Activated CD4-positive, alpha-beta T cell treated with anti-CD3 and anti-CD28 coated beads, Interleukin-2, amount 10 ng/mL, durations not matched to agents 7 days and 5 days (primary cell): ENCODE measurements at regions of chr1 and their contacts with region 1.

Region 1: DNA sequence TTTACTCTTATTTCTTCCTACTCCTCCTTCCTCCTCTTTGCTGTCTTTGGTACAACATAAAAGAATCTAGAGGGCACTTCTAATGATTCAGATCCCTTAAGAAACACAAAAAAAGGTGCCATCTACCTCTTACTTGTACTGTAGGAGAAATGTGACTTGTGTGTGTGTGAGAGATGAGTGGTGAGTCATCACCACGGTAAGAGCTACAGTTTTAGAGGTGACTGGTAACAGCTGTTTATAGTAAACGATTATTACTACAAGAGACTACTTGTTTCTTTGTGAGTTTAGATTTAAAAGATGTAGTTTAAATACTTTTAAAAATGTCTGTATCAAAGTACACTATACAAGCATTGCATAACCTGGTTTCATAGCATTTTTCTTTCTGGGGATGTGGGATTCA is 40.4 kb downstream of the SLC35D1 start:
- DNase-seq: no peak
- H3K4me3 Mint-ChIP-seq: no peak overlapping the region
- H3K27ac Mint-ChIP-seq: no peak overlapping the region
- H3K4me1 Mint-ChIP-seq: peaks cover 2% of the 10 kb centered on the region
- H3K27me3 Mint-ChIP-seq: no peaks in the 10 kb centered on the region

Region 2: DNA sequence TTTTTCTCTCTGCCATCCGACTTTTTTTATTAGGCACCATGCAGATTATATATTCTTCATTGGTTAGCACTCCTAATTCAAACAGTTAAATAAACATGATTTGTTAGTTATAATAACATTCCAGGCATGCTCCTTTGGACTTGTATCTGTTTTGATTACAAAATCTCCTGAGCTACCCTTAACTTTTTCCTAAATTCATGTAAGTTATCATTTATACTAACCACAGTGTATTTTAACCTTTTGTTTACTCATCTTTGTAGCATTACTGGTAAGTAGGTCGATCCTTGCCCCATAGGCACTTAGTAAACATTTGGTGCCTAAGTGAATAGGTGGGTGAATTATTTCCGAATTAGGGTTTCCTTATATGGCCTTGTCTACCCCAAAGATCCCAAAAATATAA is 45.0 kb before region 1 on chr1:
- CTCF ChIA-PET with region 1: no interaction called
- POLR2A ChIA-PET with region 1: no interaction called
- DNase-seq: no peak
- H3K4me3 Mint-ChIP-seq: no peak overlapping the region
- H3K27ac Mint-ChIP-seq: no peak overlapping the region
- H3K4me1 Mint-ChIP-seq: peaks cover 20% of the 10 kb centered on the region
- H3K27me3 Mint-ChIP-seq: no peaks in the 10 kb centered on the region

Region 3: DNA sequence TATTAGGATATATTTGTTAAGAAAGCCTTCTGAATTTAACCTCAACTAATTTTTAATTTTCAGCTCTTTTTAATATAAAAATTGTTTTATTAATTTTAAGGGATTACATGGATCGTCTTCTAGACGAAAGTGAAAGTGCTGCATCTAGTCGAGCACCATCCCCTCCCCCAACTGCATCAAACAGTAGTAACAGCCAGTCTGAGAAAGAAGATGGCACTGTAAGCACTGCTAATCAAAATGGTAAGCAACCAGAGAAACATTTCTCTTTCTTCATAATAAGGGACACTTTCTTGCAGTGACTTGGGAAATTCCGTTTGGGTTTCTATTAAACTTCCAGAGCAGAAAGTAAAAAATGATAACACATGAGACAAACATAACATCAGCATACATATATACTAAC is 31.9 kb before region 1 on chr1:
- CTCF ChIA-PET with region 1: no interaction called
- POLR2A ChIA-PET with region 1: no interaction called
- DNase-seq: peak; percentile 76
- H3K4me3 Mint-ChIP-seq: peak overlapping the region; percentile 60
- H3K27ac Mint-ChIP-seq: peak overlapping the region; percentile 82
- H3K4me1 Mint-ChIP-seq: peaks cover 22% of the 10 kb centered on the region
- H3K27me3 Mint-ChIP-seq: no peaks in the 10 kb centered on the region

Region 4: GRCh38 chr1:67029472-67029871 is 15.9 kb after region 1 on chr1:
- CTCF ChIA-PET with region 1: no interaction called
- POLR2A ChIA-PET with region 1: interaction called, 13 read pairs
- DNase-seq: no peak
- H3K4me3 Mint-ChIP-seq: no peak overlapping the region
- H3K27ac Mint-ChIP-seq: no peak overlapping the region
- H3K4me1 Mint-ChIP-seq: no peaks in the 10 kb centered on the region
- H3K27me3 Mint-ChIP-seq: no peaks in the 10 kb centered on the region